AG04450 (cell line): ENCODE measurements at regions of chr19 and their contacts with region 1.

Region 1: GRCh38 chr19:28737021-28737895 is 475.7 kb downstream of the UQCRFS1 start:
- DNase-seq: peak; percentile 2
- H3K4me3 ChIP-seq: no peak overlapping the region
- H3K27ac ChIP-seq: no peak overlapping the region
- H3K27me3 ChIP-seq: no peaks in the 10 kb centered on the region
- CTCF ChIP-seq: peak; percentile 55

Region 2: GRCh38 chr19:28530406-28531035 is 206.7 kb before region 1 on chr19:
- CTCF ChIA-PET with region 1: no interaction called
- POLR2A ChIA-PET with region 1: no interaction called
- DNase-seq: no peak
- H3K4me3 ChIP-seq: no peak overlapping the region
- H3K27ac ChIP-seq: no peak overlapping the region
- H3K27me3 ChIP-seq: no peaks in the 10 kb centered on the region
- CTCF ChIP-seq: no peak

Region 3: GRCh38 chr19:28878862-28879566 is 141.8 kb after region 1 on chr19:
- CTCF ChIA-PET with region 1: interaction called, 51 read pairs
- POLR2A ChIA-PET with region 1: no interaction called
- DNase-seq: peak; percentile 34
- H3K4me3 ChIP-seq: no peak overlapping the region
- H3K27ac ChIP-seq: no peak overlapping the region
- H3K27me3 ChIP-seq: no peaks in the 10 kb centered on the region
- CTCF ChIP-seq: peak; percentile 58

Region 4: DNA sequence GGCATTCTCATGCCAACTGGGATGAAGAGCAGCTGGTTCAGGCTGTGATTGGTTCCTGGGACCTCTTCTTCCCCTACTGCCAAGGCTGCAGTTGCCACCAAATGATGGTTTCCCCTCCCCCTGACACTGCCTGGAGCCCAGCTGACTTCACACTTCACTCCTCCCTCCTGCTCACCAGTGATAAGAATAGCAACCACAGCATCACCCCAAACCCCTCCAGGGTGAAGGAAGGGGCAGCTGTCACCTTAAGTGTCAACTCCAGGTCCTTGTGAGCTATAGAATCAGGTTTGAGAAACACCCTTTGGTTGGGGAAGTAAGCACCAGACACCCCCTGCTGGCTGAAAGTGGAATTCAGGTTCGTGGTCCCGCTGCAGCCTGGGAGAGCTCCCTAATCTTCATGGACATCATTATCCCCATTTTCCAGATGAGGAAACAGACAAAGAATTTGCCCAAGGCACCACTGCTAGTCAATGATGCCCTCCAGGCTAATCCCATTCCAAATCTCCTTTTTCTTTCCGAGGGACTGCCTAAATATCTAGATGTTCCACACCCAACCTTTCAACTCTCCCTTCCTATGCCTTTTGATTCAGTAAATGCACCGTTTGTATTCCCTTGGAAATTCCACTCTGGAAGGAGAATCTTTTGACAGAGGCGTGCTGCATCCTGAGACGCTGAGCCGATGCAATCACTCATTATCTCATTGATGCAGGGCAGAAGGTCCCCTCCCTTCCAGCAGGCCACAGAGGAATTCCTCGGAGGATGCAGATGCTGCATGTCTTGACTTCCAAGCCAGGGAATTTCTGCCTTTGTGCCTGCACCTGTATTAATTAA is 526.3 kb after region 1 on chr19:
- CTCF ChIA-PET with region 1: interaction called, 29 read pairs
- POLR2A ChIA-PET with region 1: no interaction called
- DNase-seq: no peak
- H3K4me3 ChIP-seq: no peak overlapping the region
- H3K27ac ChIP-seq: no peak overlapping the region
- H3K27me3 ChIP-seq: no peaks in the 10 kb centered on the region
- CTCF ChIP-seq: peak; percentile 67